ENCODE measurements at regions of chr12 and their contacts with region 1.

Region 1: GRCh38 chr12:90712671-90713070 is 242.3 kb downstream of the CCER1 start:
- DNase-seq: peak; percentile 44
- ATAC-seq: no peak
- H3K4me3 ChIP-seq: no peak overlapping the region
- H3K27ac ChIP-seq: no peak overlapping the region
- H3K4me1 ChIP-seq: peaks cover 7% of the 10 kb centered on the region; the same call in 1 of the 2 replicates
- H3K27me3 ChIP-seq: no peaks in the 10 kb centered on the region
- CTCF ChIP-seq: no peak

Region 2: GRCh38 chr12:90773491-90773890 is 60.8 kb after region 1 on chr12:
- CTCF ChIA-PET with region 1: no interaction called
- POLR2A ChIA-PET with region 1: no interaction called
- intact Hi-C with region 1: loop called (anchors 10 kb)
- DNase-seq: no peak
- ATAC-seq: no peak
- H3K4me3 ChIP-seq: no peak overlapping the region
- H3K27ac ChIP-seq: no peak overlapping the region
- H3K4me1 ChIP-seq: no peaks in the 10 kb centered on the region
- H3K27me3 ChIP-seq: no peaks in the 10 kb centered on the region
- CTCF ChIP-seq: no peak

Measured in PC-3 (cell line).